ENCODE measurements at regions of chr2 and their contacts with region 1.

Region 1: GRCh38 chr2:37468170-37468569 is 123.7 kb downstream of the QPCT start:
- DNase-seq: peak; percentile 81 to 82
- ATAC-seq: peak; percentile 99 to 100
- H3K4me3 ChIP-seq: no peak overlapping the region
- H3K27ac ChIP-seq: peak overlapping the region; percentile 50 to 78 (median 58)
- H3K4me1 ChIP-seq: peaks cover 11 to 14% of the 10 kb centered on the region in 2 donors
- H3K27me3 ChIP-seq: no peaks in the 10 kb centered on the region
- CTCF ChIP-seq: no peak
- POLR2A ChIP-seq: no peak

Region 2: GRCh38 chr2:37506407-37507050 is 38.4 kb after region 1 on chr2:
- in situ Hi-C with region 1: no loop called
- intact Hi-C with region 1: loop called (anchors 5 kb)
- DNase-seq: peak in 1 of 2 donors; percentile 19
- ATAC-seq: peak; percentile 86 to 87
- H3K4me3 ChIP-seq: no peak overlapping the region
- H3K27ac ChIP-seq: peak overlapping the region; percentile 49 to 79 (median 69)
- H3K4me1 ChIP-seq: peaks cover 31 to 39% of the 10 kb centered on the region in 2 donors
- H3K27me3 ChIP-seq: no peaks in the 10 kb centered on the region
- CTCF ChIP-seq: no peak
- POLR2A ChIP-seq: no peak

Region 3: DNA sequence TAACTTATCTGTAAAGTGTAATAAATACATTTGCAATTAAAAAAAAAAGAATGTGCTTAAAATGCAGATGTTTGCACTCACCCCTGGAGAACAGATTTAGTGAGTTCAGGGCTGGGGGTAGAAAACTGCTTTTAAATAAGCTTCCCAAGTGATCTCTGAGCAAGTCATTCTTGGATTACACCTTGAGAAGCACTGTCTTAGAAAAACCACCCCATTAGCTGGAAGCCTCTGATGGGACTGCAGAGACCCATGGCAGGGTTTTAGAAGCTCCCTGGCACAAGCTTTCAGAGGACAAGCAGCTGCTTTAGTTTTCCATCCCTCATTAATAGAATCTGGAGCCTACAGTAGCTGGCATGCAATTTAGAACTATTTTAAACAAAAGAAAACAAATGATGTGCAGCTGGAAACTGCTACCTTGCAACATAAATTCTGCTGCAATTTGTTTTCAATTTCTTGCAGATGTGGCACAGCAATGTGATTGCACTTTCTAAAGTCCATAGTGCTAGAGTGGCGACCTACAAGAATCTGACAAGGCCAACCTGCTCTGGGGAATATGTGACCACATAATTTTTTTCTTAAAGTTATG is 61.8 kb after region 1 on chr2:
- in situ Hi-C with region 1: no loop called
- intact Hi-C with region 1: loop called (anchors 10 kb)
- DNase-seq: no peak
- ATAC-seq: no peak
- H3K4me3 ChIP-seq: no peak overlapping the region
- H3K27ac ChIP-seq: no peak overlapping the region
- H3K4me1 ChIP-seq: no peaks in the 10 kb centered on the region
- H3K27me3 ChIP-seq: no peaks in the 10 kb centered on the region
- CTCF ChIP-seq: no peak
- POLR2A ChIP-seq: no peak